Activated CD4-positive, alpha-beta memory T cell treated with anti-CD3 and anti-CD28 coated beads, Interleukin-2, amount 10 ng/mL, durations not matched to agents 7 days and 5 days (primary cell): ENCODE measurements at regions of chr11 and their contacts with region 1.

Region 1: GRCh38 chr11:14907411-14908213 is 15.6 kb upstream of the CYP2R1 start:
- DNase-seq: peak; percentile 89
- H3K4me3 Mint-ChIP-seq: no peak overlapping the region
- H3K27ac Mint-ChIP-seq: peak overlapping the region; percentile 56
- H3K4me1 Mint-ChIP-seq: peaks cover 49% of the 10 kb centered on the region
- H3K27me3 Mint-ChIP-seq: no peaks in the 10 kb centered on the region

Region 2: DNA sequence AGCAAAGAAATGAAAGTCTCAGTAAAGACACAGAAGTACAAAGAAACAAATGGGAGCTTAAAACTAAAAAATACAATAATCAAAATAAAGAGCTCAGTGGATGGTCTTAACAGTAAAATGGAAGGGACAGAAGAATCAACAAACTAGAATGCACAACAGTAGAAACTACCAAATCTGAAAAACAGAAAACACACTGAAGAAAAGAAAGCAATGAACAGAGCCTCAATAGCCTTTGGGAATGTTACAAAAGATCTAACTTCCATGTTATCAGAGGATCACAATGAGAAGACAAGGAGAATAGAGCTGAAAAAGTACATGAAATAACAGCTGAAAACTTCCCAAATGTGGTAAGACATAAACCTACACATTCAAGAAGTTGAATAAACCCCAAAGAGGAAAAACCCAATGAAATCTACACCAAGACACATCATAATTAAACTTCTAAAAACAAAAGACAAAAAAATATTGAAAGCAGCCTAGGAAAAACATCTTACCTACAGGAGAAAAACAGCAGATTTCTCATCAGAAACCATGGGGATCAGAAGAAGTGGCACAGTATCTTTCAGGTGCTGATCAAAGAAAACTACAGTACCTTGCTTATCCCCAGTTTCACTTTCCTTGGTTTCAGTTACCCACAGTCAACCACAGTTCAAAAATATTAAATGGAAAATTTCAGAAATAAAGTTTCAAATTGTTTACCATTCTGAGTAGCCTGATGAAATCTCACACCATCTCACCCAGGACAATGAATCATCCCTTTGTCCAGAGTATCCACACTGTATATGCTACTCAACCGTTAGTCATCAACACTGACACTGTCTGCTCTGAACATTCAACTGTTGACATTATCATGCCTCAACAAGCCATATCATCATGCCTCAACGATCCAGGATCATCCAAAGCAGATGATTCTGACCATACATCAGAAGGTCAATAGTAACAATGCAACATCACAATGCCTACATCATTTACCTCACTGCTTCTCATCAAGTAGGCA is 570.8 kb before region 1 on chr11:
- CTCF ChIA-PET with region 1: no interaction called
- POLR2A ChIA-PET with region 1: no interaction called
- DNase-seq: no peak
- H3K4me3 Mint-ChIP-seq: no peak overlapping the region
- H3K27ac Mint-ChIP-seq: peak overlapping the region; percentile 61
- H3K4me1 Mint-ChIP-seq: peaks cover 48% of the 10 kb centered on the region
- H3K27me3 Mint-ChIP-seq: no peaks in the 10 kb centered on the region

Region 3: GRCh38 chr11:14499554-14500180 is 407.9 kb before region 1 on chr11 and contains the start of gene COPB1:
- CTCF ChIA-PET with region 1: interaction called, 17 read pairs
- POLR2A ChIA-PET with region 1: interaction called, 8 read pairs
- DNase-seq: peak; percentile 96
- H3K4me3 Mint-ChIP-seq: peak within 1 kb of the TSS; percentile 98
- H3K27ac Mint-ChIP-seq: peak within 1 kb of the TSS; percentile 91
- H3K4me1 Mint-ChIP-seq: peaks cover 45% of the 10 kb centered on the region
- H3K27me3 Mint-ChIP-seq: no peaks in the 10 kb centered on the region
- total RNA-seq, gene COPB1: 98.0 to 100.0 TPM

Region 4: GRCh38 chr11:14578541-14578956 is 329.1 kb before region 1 on chr11:
- CTCF ChIA-PET with region 1: interaction called, 17 read pairs
- POLR2A ChIA-PET with region 1: no interaction called
- DNase-seq: peak; percentile 74
- H3K4me3 Mint-ChIP-seq: peak overlapping the region; percentile 42
- H3K27ac Mint-ChIP-seq: peak overlapping the region; percentile 91
- H3K4me1 Mint-ChIP-seq: peaks cover 43% of the 10 kb centered on the region
- H3K27me3 Mint-ChIP-seq: no peaks in the 10 kb centered on the region

Region 5: DNA sequence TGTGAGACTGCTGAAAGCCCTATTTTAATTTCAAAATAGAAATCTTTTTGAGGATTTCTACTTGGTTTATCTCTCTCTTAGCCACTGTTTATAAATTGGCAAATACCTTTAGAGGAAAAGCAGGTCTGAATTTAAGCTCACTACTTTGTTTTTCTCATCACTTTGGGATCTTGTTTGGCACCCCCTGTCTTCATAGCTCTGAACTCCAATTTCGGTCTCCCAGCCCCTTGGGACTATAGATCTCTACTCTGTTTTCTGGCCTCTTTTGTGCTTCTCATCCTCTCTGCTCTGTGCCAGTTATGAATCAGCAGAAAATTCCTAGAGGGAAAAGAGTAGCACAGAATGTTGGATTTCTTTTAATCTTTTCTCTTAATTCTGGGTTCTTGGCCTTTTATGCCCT is 133.9 kb before region 1 on chr11:
- CTCF ChIA-PET with region 1: interaction called, 22 read pairs
- POLR2A ChIA-PET with region 1: no interaction called
- DNase-seq: no peak
- H3K4me3 Mint-ChIP-seq: no peak overlapping the region
- H3K27ac Mint-ChIP-seq: no peak overlapping the region
- H3K4me1 Mint-ChIP-seq: peaks cover 45% of the 10 kb centered on the region
- H3K27me3 Mint-ChIP-seq: no peaks in the 10 kb centered on the region

Region 6: DNA sequence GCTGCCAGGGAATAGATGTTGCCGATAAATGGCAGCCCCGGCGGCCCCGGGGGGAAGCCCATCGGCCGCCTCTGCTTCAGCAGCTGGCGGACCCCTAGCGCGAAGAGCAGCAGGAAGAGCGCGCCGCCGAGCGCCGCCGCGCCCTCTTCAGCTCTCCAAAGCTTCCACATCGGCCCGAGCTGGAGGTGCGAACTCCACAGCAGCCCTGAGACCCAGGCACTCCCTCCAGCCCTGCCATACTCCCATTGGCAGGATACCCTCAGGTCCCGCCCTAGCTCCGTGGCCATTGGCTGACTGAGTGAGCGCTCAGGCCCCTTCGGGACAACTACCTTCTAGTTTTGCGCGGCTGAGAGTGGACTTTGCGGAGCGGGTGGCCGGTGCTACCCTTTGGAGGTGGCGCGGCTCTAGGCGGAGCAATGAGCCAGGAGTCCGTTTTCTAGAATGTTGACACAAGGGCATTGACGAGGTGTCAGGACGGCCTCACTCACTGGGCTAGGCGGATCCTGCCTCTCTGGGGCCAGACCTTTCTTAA is 15.5 kb before region 1 on chr11 and contains the start of gene CYP2R1:
- CTCF ChIA-PET with region 1: interaction called, 201 read pairs
- POLR2A ChIA-PET with region 1: interaction called, 26 read pairs
- DNase-seq: peak; percentile 94
- H3K4me3 Mint-ChIP-seq: peak within 1 kb of the TSS; percentile 90
- H3K27ac Mint-ChIP-seq: peak within 1 kb of the TSS; percentile 95
- H3K4me1 Mint-ChIP-seq: peaks cover 57% of the 10 kb centered on the region
- H3K27me3 Mint-ChIP-seq: no peaks in the 10 kb centered on the region
- total RNA-seq, gene CYP2R1: 22.2 TPM

Region 7: DNA sequence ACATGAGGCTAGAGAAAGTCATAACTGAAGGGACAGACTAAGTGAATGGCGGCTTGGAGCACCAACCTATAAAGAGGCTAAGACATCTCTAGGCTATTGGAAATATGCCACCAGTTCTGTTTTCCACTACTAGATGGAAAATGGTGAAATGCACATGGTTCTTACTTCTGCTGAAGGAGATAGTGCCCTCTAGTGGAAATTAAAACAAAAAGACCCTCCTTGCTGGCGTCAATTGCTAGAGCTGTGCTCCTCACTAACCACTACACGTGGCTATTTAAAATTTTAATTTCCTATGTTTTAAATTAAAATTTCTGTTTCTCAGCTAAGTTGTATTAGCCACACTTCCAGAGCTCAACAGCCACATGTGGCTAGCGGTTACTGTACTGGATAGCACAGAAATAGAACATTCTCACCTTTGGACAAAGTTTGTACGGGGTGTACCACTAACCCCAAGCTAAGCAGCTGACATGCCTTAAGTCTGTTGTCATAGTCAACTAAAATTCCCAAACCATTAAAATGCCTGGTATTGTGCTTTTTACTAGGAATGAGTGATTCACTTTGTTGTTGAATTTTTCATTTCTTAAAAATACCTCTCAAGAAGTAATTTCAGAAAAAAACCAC is 98.6 kb after region 1 on chr11:
- CTCF ChIA-PET with region 1: interaction called, 77 read pairs
- POLR2A ChIA-PET with region 1: no interaction called
- DNase-seq: no peak
- H3K4me3 Mint-ChIP-seq: no peak overlapping the region
- H3K27ac Mint-ChIP-seq: no peak overlapping the region
- H3K4me1 Mint-ChIP-seq: no peaks in the 10 kb centered on the region
- H3K27me3 Mint-ChIP-seq: peaks cover 44% of the 10 kb centered on the region